ENCODE measurements at regions of chr18 and their contacts with region 1.

Region 1: GRCh38 chr18:32470713-32471633 is at the start of gene GAREM1:
- DNase-seq: peak; percentile 95 to 98 (median 97)
- ATAC-seq: peak; percentile 87 to 93 (median 90)
- H3K4me3 ChIP-seq: peak within 1 kb of the TSS; percentile 48 to 92 (median 79)
- H3K27ac ChIP-seq: peak within 1 kb of the TSS; percentile 79 to 89 (median 87)
- H3K4me1 ChIP-seq: peaks cover 5 to 17% (median 14%) of the 10 kb centered on the region in 3 donors
- H3K27me3 ChIP-seq: no peaks in the 10 kb centered on the region
- CTCF ChIP-seq: peak; percentile 22 to 65 (median 58)
- total RNA-seq, gene GAREM1: 8.8 to 55.9 (median 17.9) TPM

Region 2: DNA sequence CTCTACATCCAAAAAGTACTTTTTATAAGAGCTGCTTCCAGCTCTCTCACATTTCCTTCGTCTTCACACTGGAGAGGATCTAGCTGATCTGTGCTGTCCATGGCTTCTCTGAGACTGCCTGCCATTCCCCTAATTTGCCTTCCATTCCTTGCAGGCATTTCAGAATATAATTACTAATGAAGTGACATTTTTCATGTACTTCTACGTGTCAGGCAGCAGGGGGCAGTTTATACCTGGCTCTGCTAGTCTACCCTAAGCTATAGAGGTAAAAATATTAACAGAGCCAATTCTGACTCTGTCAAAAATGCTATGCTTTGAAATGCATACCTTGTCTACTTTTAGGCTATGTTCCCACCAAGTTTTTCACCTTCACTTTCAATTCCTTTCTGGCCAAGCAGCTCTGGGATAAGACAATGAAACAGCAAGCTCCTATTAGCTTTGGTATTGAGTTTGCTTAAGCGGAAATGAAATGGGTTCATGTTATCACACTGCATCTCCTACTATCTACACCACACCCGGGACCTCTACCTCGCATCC is 199.2 kb before region 1 on chr18:
- intact Hi-C with region 1: loop called in 2 of 3 experiments (anchors 10 kb)
- DNase-seq: peak in 3 of 6 donors; percentile 25 to 46 (median 31)
- ATAC-seq: peak; percentile 60 to 97 (median 92)
- H3K4me3 ChIP-seq: no peak overlapping the region
- H3K27ac ChIP-seq: no peak overlapping the region
- H3K4me1 ChIP-seq: no peaks in the 10 kb centered on the region
- H3K27me3 ChIP-seq: no peaks in the 10 kb centered on the region
- CTCF ChIP-seq: peak in 3 of 4 donors; percentile 17 to 50 (median 35)

Region 3: DNA sequence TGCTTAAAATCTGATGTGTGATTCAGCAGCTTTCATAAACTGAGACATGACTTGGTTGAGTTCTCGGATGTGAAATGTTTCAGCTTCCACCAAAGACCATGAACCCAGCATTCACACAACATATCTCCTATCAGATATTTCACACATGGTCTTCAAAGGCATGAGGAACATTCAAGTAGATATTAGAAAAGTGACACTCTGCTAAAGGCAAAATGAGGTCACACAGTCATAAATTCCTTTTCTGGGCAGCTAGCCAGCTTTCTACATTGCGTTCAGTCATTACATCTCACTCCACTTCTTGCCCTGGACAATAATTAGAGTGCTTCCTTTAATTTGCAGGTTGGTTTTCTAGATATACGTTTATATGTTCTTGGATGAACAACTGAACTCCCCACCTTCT is 97.0 kb before region 1 on chr18:
- intact Hi-C with region 1: loop called in 1 of 3 experiments (anchors 10 kb)
- DNase-seq: peak in 3 of 6 donors; percentile 46 to 56 (median 55)
- ATAC-seq: peak; percentile 4 to 36 (median 15)
- H3K4me3 ChIP-seq: no peak overlapping the region
- H3K27ac ChIP-seq: peak overlapping the region; percentile 84 to 92 (median 88)
- H3K4me1 ChIP-seq: peaks cover 32 to 52% (median 50%) of the 10 kb centered on the region in 3 donors
- H3K27me3 ChIP-seq: no peaks in the 10 kb centered on the region
- CTCF ChIP-seq: no peak

Region 4: DNA sequence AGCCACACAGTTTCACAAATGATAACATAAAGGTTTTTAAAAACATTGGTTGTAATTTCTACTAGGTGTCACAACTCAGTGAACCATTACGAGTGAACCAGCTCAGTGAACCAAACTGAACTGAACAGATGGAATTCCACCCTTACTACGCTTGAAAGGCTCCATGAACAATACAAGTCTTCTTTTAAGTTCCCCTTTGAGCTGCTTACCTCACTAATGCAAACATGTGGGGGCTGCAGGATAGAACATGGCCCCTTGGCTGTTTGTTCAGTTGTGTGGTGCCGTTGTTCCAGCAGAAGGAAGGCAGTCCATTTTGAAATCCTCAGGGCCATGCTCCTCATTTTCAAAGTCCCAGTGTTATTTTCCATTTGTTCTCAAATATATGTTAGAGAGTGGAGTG is 332.6 kb after region 1 on chr18:
- intact Hi-C with region 1: no loop called
- DNase-seq: no peak
- ATAC-seq: no peak
- H3K4me3 ChIP-seq: no peak overlapping the region
- H3K27ac ChIP-seq: no peak overlapping the region
- H3K4me1 ChIP-seq: no peaks in the 10 kb centered on the region
- H3K27me3 ChIP-seq: no peaks in the 10 kb centered on the region
- CTCF ChIP-seq: no peak